ENCODE measurements at regions of chr9 and their contacts with region 1.

Region 1: DNA sequence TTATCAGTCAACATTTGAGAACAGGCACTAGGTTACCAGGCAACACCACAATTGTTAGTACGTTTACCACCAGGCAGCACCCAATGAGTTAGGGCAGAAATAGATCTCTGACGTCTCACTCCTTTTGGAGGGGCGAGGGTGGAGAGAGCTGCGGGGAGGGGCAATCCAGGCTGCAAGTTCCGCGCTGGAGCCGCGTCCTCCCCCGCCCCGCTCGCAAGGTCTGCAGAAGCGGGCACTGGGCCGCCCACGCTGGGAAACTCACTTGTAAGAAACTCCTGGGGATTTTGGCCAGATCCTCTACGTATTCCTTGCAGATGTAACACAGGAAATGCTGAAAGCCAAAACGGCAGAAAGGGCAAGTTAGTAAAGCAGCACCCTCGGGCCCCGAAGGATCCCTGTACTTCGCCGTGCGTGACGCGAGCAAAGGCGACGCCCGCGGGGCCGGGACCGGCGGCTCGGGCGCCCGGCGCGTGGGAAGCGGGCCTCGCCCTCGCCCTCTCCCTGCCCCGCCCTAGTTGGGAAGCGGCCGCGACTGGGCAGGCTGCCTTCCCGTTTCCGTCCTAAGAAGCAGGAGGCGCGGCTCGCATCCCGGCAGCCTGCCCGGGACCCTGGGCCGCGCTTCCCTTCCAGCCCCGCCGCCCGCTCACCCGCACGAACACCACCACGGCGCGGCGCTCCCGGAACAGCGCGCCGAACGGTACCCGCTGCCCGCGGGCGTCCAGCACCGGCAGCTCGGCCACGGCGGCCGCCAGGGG is 497 bp downstream of the PRXL2C start:
- DNase-seq: peak; percentile 89 to 92
- ATAC-seq: peak; percentile 89 to 96 (median 94)
- H3K4me3 ChIP-seq: peak overlapping the region; percentile 49 to 74 (median 66)
- H3K27ac ChIP-seq: peak overlapping the region; percentile 95 to 100 (median 99)
- H3K4me1 ChIP-seq: peaks cover 0 to 41% (median 24%) of the 10 kb centered on the region in 9 donors
- H3K27me3 ChIP-seq: no peaks in the 10 kb centered on the region
- CTCF ChIP-seq: peak in 3 of 9 donors; percentile 8 to 44 (median 43)

Region 2: DNA sequence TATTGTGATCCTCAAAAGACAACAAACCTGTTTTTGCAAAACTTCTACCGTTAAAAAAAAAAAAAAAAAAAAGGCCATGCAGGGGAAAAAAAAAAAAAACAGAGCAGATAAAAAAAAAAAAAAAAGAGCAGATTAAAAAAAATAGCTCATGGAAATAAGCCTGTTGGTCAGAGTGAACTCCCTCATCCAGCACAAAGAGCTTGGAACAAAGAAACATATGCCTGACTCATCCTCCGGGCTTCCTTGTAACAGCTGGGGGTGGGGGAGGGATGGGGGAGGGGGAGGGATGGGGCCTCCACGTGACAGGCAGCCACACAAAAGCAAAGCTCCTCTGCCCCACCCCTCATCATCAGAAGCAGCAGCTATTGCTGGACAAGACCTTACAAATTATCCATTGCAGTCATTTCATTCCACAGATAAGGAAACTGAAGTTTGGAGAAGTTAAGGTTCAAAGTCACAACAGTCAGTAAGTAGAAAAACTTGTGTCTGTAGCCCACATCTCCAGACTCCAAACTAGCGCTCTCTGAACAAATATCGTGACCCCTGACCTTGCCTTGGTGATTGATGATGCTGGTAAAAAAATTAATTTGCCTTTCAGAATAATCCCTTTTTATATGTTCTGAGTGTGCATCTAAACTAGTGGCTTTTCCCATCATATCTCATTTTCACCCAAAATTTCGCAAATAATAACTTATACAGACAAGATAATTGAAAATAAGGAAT is 310.0 kb before region 1 on chr9:
- intact Hi-C with region 1: loop called in 1 of 10 experiments (anchors 5 kb)
- DNase-seq: peak; percentile 23 to 59
- ATAC-seq: peak; percentile 78 to 95 (median 92)
- H3K4me3 ChIP-seq: no peak overlapping the region
- H3K27ac ChIP-seq: peak overlapping the region in 9 of 10 donors; percentile 35 to 69 (median 49)
- H3K4me1 ChIP-seq: peaks cover 3 to 27% (median 17%) of the 10 kb centered on the region in 9 donors
- H3K27me3 ChIP-seq: no peaks in the 10 kb centered on the region
- CTCF ChIP-seq: no peak

Region 3: GRCh38 chr9:96478829-96479371 is 175.7 kb before region 1 on chr9:
- intact Hi-C with region 1: loop called in 1 of 10 experiments (anchors 10 kb)
- DNase-seq: no peak
- ATAC-seq: no peak
- H3K4me3 ChIP-seq: no peak overlapping the region
- H3K27ac ChIP-seq: no peak overlapping the region
- H3K4me1 ChIP-seq: peaks cover 0 to 9% (median 0%) of the 10 kb centered on the region in 9 donors
- H3K27me3 ChIP-seq: no peaks in the 10 kb centered on the region
- CTCF ChIP-seq: no peak

Region 4: GRCh38 chr9:96566498-96567207 is 88.0 kb before region 1 on chr9:
- intact Hi-C with region 1: loop called in 1 of 10 experiments (anchors 10 kb)
- DNase-seq: peak; percentile 81 to 83
- ATAC-seq: peak; percentile 92 to 95 (median 94)
- H3K4me3 ChIP-seq: peak overlapping the region; percentile 53 to 91 (median 81)
- H3K27ac ChIP-seq: peak overlapping the region; percentile 81 to 95 (median 86)
- H3K4me1 ChIP-seq: peaks cover 0 to 34% (median 20%) of the 10 kb centered on the region in 9 donors
- H3K27me3 ChIP-seq: peaks cover 0 to 4% (median 0%) of the 10 kb centered on the region in 7 donors
- CTCF ChIP-seq: peak; percentile 52 to 87 (median 71)

Region 5: GRCh38 chr9:96607971-96608370 is 46.6 kb before region 1 on chr9:
- intact Hi-C with region 1: no loop called
- DNase-seq: no peak
- ATAC-seq: no peak
- H3K4me3 ChIP-seq: no peak overlapping the region
- H3K27ac ChIP-seq: no peak overlapping the region
- H3K4me1 ChIP-seq: peaks cover 0 to 49% (median 19%) of the 10 kb centered on the region in 9 donors
- H3K27me3 ChIP-seq: peaks cover 0 to 12% (median 0%) of the 10 kb centered on the region in 7 donors
- CTCF ChIP-seq: no peak

Region 6: GRCh38 chr9:96619491-96620154 is 35.0 kb before region 1 on chr9 and contains the start of gene CDC14B:
- intact Hi-C with region 1: loop called in 2 of 10 experiments (anchors 2 to 5 kb)
- DNase-seq: peak; percentile 87 to 89
- ATAC-seq: peak; percentile 71 to 85 (median 79)
- H3K4me3 ChIP-seq: peak within 1 kb of the TSS; percentile 46 to 91 (median 68)
- H3K27ac ChIP-seq: peak within 1 kb of the TSS; percentile 65 to 92 (median 84)
- H3K4me1 ChIP-seq: peaks cover 0 to 15% (median 4%) of the 10 kb centered on the region in 9 donors
- H3K27me3 ChIP-seq: peaks cover 0 to 54% (median 0%) of the 10 kb centered on the region in 7 donors
- CTCF ChIP-seq: peak in 1 of 9 donors; percentile 32
- total RNA-seq, gene CDC14B: 17.0 to 30.8 (median 27.0) TPM

Region 7: DNA sequence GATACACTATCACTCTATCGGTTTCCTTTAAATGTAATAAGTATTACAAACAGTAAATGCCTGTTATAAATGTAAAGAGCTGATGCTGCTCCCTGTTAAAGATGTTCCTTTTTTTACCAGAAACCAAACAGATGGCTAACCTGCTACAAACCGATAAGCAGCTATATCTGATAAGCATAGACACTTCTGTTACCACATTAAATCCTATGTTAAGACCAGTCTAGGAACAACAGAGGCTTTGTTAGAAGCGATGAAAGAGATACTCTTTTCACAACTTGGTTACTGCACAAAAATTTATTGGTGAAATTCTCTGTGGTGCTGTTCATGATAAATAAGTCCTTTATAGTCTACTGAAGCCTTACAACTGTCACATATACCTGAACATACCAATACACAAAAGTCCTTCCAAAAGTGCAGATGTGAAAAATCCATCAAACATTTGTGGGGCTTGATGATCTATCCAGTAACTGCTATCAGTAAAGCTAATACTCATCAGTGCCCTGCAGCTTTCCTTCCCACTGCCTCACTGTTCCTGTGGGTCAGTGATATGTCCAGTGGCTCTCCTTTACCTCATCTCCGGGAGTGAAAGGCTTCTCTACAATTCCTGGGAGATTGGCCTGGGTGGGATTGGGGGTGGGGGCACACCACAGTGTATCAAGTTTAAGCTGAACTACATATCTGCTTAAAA is 26.3 kb after region 1 on chr9:
- intact Hi-C with region 1: no loop called
- DNase-seq: no peak
- ATAC-seq: no peak
- H3K4me3 ChIP-seq: no peak overlapping the region
- H3K27ac ChIP-seq: no peak overlapping the region
- H3K4me1 ChIP-seq: no peaks in the 10 kb centered on the region
- H3K27me3 ChIP-seq: no peaks in the 10 kb centered on the region
- CTCF ChIP-seq: no peak

Region 8: DNA sequence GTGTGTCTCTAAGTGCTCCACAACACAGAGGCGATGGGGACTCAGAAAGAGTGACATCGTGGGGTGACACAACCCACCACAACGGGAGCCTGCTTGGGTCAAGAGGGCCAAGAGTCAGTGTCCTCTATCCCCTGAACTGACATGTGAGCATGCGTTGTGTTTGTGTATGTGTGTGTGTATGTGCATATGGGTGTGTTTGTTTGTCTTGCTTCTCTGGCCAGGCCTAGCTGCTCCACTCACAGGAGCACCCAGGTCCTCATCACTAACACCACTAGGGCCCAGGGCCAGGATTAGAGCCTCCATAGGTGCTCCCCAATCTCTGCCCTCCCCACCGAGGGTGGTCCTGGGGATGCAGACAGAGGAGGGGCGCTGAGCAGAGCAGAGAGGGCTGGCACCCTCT is 499.3 kb after region 1 on chr9:
- intact Hi-C with region 1: no loop called
- DNase-seq: no peak
- ATAC-seq: no peak
- H3K4me3 ChIP-seq: no peak overlapping the region
- H3K27ac ChIP-seq: no peak overlapping the region
- H3K4me1 ChIP-seq: no peaks in the 10 kb centered on the region
- H3K27me3 ChIP-seq: peaks cover 0 to 5% (median 0%) of the 10 kb centered on the region in 7 donors
- CTCF ChIP-seq: no peak

Measured in heart right ventricle (tissue), 16 donors.